ENCODE measurements at regions of chr10 and their contacts with region 1.

Region 1: DNA sequence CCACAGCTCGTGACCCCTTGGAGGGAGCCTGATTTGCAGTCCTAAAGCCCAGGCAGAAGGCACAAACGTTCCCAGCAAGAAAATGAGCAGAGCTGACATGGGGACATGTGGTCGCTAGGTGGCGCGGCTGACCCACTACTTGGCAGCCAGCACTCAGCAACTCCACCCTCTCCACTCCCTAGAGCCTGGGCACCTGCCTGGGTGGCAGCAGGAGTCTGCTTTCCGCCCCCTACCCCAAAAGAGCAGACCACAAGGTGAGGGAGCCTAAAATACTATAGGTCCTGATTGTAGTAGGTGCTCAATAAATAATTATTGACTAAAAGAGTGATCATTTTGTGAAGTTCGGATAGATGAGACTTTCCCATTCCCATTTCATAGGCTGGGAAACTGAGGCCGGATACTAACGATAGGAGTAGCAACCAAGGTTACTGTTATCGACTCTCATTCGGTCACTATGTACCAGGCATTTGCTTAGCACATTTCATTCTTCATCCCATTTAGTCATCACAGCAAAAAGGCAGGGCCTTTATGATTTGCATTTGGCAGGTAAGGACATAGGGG is 57.4 kb downstream of the NEUROG3 start:
- DNase-seq: peak; percentile 71 to 90
- ATAC-seq: peak; percentile 79 to 98 (median 90)
- H3K4me3 ChIP-seq: no peak overlapping the region
- H3K4me3 Mint-ChIP-seq: no peak overlapping the region
- H3K27ac ChIP-seq: no peak overlapping the region
- H3K27ac Mint-ChIP-seq: no peak overlapping the region
- H3K4me1 ChIP-seq: no peaks in the 10 kb centered on the region
- H3K4me1 Mint-ChIP-seq: no peaks in the 10 kb centered on the region
- H3K27me3 ChIP-seq: peaks cover 3% of the 10 kb centered on the region
- H3K27me3 Mint-ChIP-seq: peaks cover 28 to 63% of the 10 kb centered on the region in 2 donors
- CTCF ChIP-seq: peak; percentile 90

Region 2: GRCh38 chr10:69558559-69558958 is 42.8 kb after region 1 on chr10:
- intact Hi-C with region 1: no loop called
- DNase-seq: peak; percentile 29 to 45
- ATAC-seq: peak; percentile 79 to 99 (median 88)
- H3K4me3 ChIP-seq: no peak overlapping the region
- H3K4me3 Mint-ChIP-seq: no peak overlapping the region
- H3K27ac ChIP-seq: no peak overlapping the region
- H3K27ac Mint-ChIP-seq: peak overlapping the region in 1 of 2 donors; percentile 65
- H3K4me1 ChIP-seq: peaks cover 14% of the 10 kb centered on the region
- H3K4me1 Mint-ChIP-seq: peaks cover 13% of the 10 kb centered on the region in 2 donors
- H3K27me3 ChIP-seq: no peaks in the 10 kb centered on the region
- H3K27me3 Mint-ChIP-seq: peaks cover 21 to 28% of the 10 kb centered on the region in 2 donors
- CTCF ChIP-seq: no peak

Region 3: GRCh38 chr10:69639291-69640195 is 123.8 kb after region 1 on chr10:
- intact Hi-C with region 1: loop called (anchors 1 kb)
- DNase-seq: peak; percentile 46 to 88
- ATAC-seq: peak in 2 of 3 donors; percentile 38 to 73
- H3K4me3 ChIP-seq: no peak overlapping the region
- H3K4me3 Mint-ChIP-seq: no peak overlapping the region
- H3K27ac ChIP-seq: no peak overlapping the region
- H3K27ac Mint-ChIP-seq: no peak overlapping the region
- H3K4me1 ChIP-seq: no peaks in the 10 kb centered on the region
- H3K4me1 Mint-ChIP-seq: no peaks in the 10 kb centered on the region
- H3K27me3 ChIP-seq: no peaks in the 10 kb centered on the region
- H3K27me3 Mint-ChIP-seq: peaks cover 3 to 8% of the 10 kb centered on the region in 2 donors
- CTCF ChIP-seq: peak; percentile 86

Region 4: DNA sequence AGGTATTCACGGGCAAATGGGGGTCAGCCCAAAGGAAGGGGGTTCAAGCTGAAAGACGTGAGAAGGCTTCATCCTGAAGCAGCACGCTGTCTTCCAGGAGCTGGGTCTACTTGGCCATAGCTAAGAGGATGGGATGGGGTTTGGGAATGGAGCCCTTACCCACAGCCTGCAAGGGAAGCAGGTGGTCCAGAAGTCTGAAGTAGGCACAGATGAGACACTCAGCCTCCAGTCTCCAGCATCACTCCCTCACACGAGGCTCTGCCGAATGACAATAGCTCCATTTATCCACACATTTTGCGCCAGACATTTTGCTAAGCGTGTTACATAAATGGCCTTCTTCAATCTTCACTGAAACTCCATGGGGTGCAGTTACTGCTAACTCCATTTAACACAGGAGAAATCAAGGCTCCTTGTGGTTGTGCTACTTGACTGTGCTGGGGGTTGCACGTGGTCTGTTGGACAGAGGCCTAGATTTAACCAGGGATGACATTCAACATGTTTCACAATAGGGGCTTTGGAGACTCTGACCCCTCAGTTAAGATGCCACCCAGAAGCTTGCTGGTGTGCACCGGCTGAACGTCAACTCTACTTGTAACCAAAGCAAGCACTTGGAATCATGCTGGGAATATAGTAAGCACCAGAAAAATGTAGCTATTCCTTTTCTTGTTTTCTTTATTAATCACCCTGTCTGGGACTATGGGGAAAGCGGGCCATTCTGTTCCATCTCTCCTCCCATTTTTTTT is 199.5 kb after region 1 on chr10:
- intact Hi-C with region 1: loop called (anchors 2 kb)
- DNase-seq: no peak
- ATAC-seq: no peak
- H3K4me3 ChIP-seq: no peak overlapping the region
- H3K4me3 Mint-ChIP-seq: no peak overlapping the region
- H3K27ac ChIP-seq: no peak overlapping the region
- H3K27ac Mint-ChIP-seq: no peak overlapping the region
- H3K4me1 ChIP-seq: no peaks in the 10 kb centered on the region
- H3K4me1 Mint-ChIP-seq: no peaks in the 10 kb centered on the region
- H3K27me3 ChIP-seq: no peaks in the 10 kb centered on the region
- H3K27me3 Mint-ChIP-seq: peaks cover 0 to 7% of the 10 kb centered on the region in 2 donors
- CTCF ChIP-seq: no peak

Region 5: DNA sequence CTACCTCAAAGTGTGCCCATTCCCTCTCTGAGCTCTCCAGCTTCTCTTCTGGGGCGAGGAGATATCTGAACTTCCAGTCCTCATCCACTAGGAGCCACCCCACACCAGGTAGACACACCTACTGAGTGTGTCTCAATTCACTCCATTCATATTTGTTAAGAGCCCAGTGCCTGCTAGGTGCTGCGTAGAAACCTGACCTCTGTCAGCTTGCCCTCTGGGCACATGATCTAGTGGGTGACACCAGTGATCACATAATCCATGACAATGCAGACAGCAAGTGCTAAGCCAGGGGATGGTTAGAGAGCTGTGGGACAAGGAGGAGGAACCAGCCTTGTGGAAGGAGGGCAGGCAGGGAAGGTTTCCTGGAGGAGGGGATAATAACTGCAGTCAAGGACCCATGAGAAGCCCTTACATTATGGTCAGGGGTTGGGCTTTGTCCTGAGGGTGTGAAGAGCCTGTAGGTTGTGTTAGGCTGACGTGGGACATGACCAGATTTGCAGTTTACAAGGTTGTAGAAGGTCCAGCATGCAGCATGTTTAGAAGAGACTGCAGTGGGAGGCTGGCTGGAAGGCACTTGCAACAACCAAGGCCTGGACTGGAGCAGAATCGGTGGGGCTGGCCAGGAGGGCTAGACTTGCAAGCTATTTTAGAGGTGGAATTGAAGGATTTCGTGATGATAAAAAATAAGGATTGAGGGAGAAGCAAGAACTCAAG is 367.7 kb after region 1 on chr10:
- intact Hi-C with region 1: no loop called
- DNase-seq: no peak
- ATAC-seq: no peak
- H3K4me3 ChIP-seq: no peak overlapping the region
- H3K4me3 Mint-ChIP-seq: no peak overlapping the region
- H3K27ac ChIP-seq: no peak overlapping the region
- H3K27ac Mint-ChIP-seq: no peak overlapping the region
- H3K4me1 ChIP-seq: no peaks in the 10 kb centered on the region
- H3K4me1 Mint-ChIP-seq: peaks cover 0 to 13% of the 10 kb centered on the region in 2 donors
- H3K27me3 ChIP-seq: no peaks in the 10 kb centered on the region
- H3K27me3 Mint-ChIP-seq: peaks cover 9 to 19% of the 10 kb centered on the region in 2 donors
- CTCF ChIP-seq: no peak